AG04449 (cell line): ENCODE measurements at regions of chrX and their contacts with region 1.

Region 1: GRCh38 chrX:119516157-119516702 is 48.0 kb downstream of the SLC25A5 start:
- DNase-seq: no peak
- H3K4me3 ChIP-seq: no peak overlapping the region
- CTCF ChIP-seq: peak; percentile 73

Region 2: DNA sequence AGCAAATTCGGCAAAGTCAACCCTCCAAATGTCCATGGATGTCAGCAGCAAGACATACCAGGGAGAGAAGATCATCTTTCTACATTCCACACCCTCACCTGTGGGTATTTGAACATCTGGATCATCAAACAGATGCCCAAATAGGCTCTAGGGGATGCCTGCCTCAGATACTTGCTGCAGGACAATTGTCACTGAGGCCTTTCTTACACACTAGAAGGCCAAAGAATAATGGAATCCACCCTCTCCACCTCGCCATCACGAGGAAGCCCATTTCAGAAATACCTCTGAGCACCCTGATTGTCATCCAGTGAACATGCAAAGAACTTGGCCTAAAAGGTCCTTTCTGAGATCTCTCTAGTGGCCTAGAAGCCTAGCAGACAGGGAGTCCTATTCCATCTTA is 381.8 kb before region 1 on chrX:
- CTCF ChIA-PET with region 1: no interaction called
- POLR2A ChIA-PET with region 1: no interaction called
- DNase-seq: no peak
- H3K4me3 ChIP-seq: no peak overlapping the region
- CTCF ChIP-seq: no peak

Region 3: GRCh38 chrX:119249836-119250340 is 266.3 kb before region 1 on chrX:
- CTCF ChIA-PET with region 1: no interaction called
- POLR2A ChIA-PET with region 1: no interaction called
- DNase-seq: no peak
- H3K4me3 ChIP-seq: no peak overlapping the region
- CTCF ChIP-seq: no peak

Region 4: DNA sequence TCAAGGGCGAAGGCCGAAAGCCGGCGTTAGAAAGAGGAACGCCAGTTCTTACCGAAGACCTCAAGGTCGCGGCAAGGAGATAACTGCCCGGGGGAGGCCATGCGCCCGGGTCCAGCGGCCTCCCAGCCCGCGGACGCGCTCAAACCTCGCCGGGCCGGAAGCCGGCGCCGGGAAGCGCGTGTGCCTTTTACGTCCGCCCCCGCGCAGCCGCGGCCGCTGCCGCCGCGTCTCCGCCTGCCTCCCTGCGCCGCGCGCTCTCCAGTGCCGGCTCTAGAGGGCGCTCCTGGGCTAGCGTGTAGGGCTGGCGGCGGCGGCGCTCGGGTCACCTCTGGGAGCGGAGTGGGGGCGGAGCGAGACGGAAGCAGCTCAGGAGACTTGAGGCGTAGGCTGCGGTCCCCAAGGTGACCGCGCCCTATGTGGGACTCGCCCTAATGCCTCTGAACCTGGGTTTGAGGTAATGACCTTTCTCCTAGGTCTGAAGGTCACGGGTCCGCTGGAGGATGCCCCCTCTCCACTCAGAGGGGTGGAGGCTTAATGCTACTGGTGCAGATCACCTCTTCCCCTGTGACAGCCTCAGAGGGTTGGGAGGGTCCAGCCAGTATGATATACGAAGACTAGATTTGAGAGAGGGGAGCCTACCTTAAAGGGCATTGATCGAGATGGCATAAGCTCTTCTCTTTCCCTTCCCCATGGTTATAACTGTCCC is 47.1 kb before region 1 on chrX:
- CTCF ChIA-PET with region 1: interaction called, 10 read pairs
- POLR2A ChIA-PET with region 1: interaction called, 3 read pairs
- DNase-seq: no peak
- H3K4me3 ChIP-seq: peak overlapping the region; percentile 77
- CTCF ChIP-seq: peak; percentile 83

Region 5: DNA sequence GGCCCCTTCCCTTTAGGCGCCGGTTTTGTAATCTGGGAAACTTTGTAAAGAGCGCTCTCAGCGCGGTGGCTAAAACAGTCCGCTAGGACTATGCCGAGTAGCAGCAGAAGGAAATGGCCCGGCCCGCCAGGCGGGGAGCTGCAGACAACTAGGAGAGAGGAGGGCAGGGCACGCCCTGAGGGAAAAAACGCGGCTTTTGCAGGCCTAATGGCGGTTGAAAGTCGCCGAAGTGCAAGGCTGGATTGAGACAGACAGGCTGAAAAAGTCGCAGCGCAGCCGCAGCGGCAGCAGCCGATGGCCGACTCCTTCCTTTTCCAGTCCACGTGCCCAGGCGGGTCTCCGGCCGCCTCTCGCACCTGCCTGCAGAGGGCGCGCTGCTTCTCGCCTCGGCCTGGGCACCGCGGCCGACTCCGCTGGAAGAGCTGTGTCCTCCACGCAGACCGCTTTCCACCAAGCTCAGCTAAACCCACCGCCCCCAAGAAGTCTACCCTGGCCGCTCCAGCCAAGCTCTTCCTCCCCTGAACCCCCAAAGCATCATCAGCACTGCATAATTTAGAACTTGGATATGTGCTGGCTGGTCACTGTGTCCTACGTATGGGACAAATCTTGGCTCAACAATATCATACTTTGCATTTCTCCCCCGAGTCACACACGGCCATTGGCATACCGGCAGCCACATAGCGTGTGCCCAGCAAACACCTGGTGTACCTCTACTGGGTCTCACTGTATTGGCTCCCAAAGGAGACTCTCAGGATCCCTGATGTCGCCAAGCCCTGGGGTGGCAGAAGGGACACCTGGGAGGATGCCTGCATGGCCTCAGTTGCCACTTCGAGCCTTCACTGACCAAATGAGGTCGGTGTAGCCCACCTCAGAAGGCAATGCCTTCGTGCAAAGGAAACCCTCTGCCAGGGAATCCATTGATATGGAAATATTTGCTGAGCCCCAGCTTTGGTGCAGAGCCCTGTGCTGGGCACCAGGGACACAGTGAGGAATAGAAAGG is 33.4 kb before region 1 on chrX:
- CTCF ChIA-PET with region 1: interaction called, 627 read pairs
- POLR2A ChIA-PET with region 1: no interaction called
- DNase-seq: no peak
- H3K4me3 ChIP-seq: peak overlapping the region; percentile 44
- CTCF ChIP-seq: peak; percentile 71

Region 6: DNA sequence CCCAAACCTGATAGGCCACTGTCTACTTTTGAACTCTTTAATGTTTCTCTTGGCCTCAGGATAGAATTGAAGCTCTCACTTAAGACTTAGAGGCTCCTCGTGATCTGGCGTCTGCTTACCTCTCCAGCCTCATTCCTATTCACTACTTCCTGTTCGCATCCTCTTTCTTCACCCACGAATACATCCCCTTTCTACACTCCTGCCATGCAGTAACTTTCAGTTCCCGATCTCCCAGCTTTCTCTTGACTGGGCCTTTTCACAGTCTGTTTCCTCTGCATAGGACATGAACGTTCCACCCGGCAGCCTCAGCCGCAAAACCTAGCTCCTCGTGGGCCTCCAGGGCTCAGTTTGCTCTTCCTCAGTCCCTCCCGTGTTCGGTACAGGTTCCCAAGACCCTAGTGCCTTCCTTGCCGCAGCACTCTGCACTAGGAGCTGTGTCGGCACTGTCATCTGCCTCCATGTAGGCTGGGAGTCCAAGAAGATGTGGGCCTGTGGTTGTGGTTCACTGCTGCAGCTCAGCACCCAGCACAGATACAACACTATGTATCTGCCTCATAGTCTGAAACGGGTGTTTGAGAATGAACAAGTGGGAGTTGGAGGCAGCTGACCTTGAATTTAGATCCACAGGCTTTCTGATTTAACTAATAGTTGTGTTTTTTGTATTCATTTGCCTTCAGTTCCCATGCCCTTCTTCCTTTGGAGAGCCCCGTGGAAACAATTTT is 259.4 kb after region 1 on chrX:
- CTCF ChIA-PET with region 1: interaction called, 10 read pairs
- POLR2A ChIA-PET with region 1: no interaction called
- DNase-seq: no peak
- H3K4me3 ChIP-seq: no peak overlapping the region
- CTCF ChIP-seq: no peak

Region 7: GRCh38 chrX:119784747-119785446 is 268.7 kb after region 1 on chrX:
- CTCF ChIA-PET with region 1: interaction called, 10 read pairs
- POLR2A ChIA-PET with region 1: no interaction called
- DNase-seq: no peak
- H3K4me3 ChIP-seq: no peak overlapping the region
- CTCF ChIP-seq: peak; percentile 54